ENCODE measurements at regions of chr6 and their contacts with region 1.

Region 1: GRCh38 chr6:103122766-103123601 is 1729.5 kb downstream of the GRIK2 start:
- DNase-seq: peak; percentile 78 to 79
- H3K4me3 ChIP-seq: no peak overlapping the region
- H3K4me3 Mint-ChIP-seq: no peak overlapping the region
- H3K27ac Mint-ChIP-seq: no peak overlapping the region
- H3K4me1 ChIP-seq: no peaks in the 10 kb centered on the region
- H3K4me1 Mint-ChIP-seq: no peaks in the 10 kb centered on the region
- H3K27me3 ChIP-seq: no peaks in the 10 kb centered on the region
- H3K27me3 Mint-ChIP-seq: no peaks in the 10 kb centered on the region
- CTCF ChIP-seq: peak; percentile 40 to 68

Region 2: GRCh38 chr6:101845621-101846020 is 1277.4 kb before region 1 on chr6:
- CTCF ChIA-PET with region 1: no interaction called
- POLR2A ChIA-PET with region 1: no interaction called
- intact Hi-C with region 1: loop called (anchors 10 kb)
- DNase-seq: no peak
- H3K4me3 ChIP-seq: no peak overlapping the region
- H3K4me3 Mint-ChIP-seq: no peak overlapping the region
- H3K27ac Mint-ChIP-seq: no peak overlapping the region
- H3K4me1 ChIP-seq: no peaks in the 10 kb centered on the region
- H3K4me1 Mint-ChIP-seq: no peaks in the 10 kb centered on the region
- H3K27me3 ChIP-seq: no peaks in the 10 kb centered on the region
- H3K27me3 Mint-ChIP-seq: no peaks in the 10 kb centered on the region
- CTCF ChIP-seq: no peak

Region 3: DNA sequence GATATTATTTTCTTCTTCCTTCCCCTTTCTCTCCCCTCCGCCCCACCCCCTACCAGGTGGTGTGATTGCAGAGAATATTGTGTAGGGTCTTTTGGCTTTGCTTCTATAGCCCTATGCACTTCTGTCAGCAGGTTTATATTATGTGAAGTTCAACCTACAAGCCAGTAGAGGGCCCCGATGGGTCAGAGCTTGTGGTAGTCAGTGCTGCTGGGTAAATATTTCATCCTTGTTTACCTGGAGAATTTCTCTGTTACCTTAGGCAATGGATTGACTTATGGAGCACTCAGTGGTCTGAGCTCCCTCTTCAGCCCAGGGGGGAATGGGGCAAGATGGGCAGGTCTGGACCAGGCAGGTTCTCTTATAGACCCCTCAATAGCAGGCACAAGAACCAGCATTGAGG is 1008.6 kb before region 1 on chr6:
- CTCF ChIA-PET with region 1: no interaction called
- POLR2A ChIA-PET with region 1: no interaction called
- intact Hi-C with region 1: loop called (anchors 1 kb)
- DNase-seq: peak in 1 of 2 experiments; percentile 27
- H3K4me3 ChIP-seq: no peak overlapping the region
- H3K4me3 Mint-ChIP-seq: no peak overlapping the region
- H3K27ac Mint-ChIP-seq: no peak overlapping the region
- H3K4me1 ChIP-seq: no peaks in the 10 kb centered on the region
- H3K4me1 Mint-ChIP-seq: no peaks in the 10 kb centered on the region
- H3K27me3 ChIP-seq: no peaks in the 10 kb centered on the region
- H3K27me3 Mint-ChIP-seq: no peaks in the 10 kb centered on the region
- CTCF ChIP-seq: peak in 1 of 2 experiments; percentile 37

Region 4: DNA sequence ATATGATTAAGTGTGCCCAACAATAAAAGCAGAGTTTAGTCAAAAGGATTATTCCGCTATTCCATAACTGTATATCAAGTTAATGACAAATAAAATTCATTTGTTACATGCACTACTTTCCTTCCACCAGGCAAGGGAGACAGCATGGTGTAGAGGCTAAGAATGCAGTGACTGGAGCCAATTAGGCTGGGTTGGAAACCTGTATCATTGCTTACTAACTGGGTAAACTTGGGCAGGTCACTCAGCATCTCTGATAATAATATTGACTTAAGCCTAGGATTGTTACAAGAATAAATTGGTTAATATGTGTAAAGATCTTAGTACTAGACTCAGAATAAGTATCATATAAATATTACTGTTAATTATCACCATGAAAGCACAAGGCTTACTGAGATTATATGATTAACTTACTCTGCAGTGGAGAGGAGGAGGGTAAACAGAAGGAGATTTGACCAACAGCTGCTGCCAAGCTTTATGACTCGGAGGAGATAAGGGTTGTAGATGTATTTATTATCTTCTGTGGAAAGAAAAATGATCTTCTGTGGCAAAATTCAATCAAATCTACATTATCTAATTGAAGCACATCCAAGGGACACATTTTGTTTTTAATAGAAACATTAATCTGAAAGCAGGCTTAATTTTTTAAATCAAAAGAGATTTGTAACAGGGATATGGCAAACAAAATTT is 269.6 kb before region 1 on chr6:
- CTCF ChIA-PET with region 1: interaction called, 3 read pairs
- POLR2A ChIA-PET with region 1: no interaction called
- intact Hi-C with region 1: loop called (anchors 1 kb)
- DNase-seq: peak; percentile 50 to 57
- H3K4me3 ChIP-seq: no peak overlapping the region
- H3K4me3 Mint-ChIP-seq: no peak overlapping the region
- H3K27ac Mint-ChIP-seq: no peak overlapping the region
- H3K4me1 ChIP-seq: peaks cover 7% of the 10 kb centered on the region
- H3K4me1 Mint-ChIP-seq: peaks cover 13% of the 10 kb centered on the region
- H3K27me3 ChIP-seq: no peaks in the 10 kb centered on the region
- H3K27me3 Mint-ChIP-seq: no peaks in the 10 kb centered on the region
- CTCF ChIP-seq: no peak

Region 5: DNA sequence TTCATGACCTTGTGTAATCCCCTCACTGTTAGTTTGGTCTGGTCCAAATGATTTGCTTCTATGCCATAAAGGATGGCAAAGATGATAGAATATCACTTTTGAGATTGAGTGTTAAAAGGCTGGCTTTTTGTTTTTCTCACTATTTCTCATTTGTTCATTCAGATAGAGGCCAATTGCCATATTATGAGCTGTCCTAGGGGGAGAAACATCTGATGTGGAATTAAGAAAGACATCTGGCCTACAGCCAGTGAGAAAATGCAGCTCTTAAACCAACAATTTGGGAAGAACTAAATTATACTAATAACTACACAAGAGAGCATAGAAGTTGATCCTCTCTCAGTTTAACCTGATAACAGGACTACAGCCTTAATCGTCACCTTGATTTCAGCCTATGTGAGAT is 60.8 kb before region 1 on chr6:
- CTCF ChIA-PET with region 1: no interaction called
- POLR2A ChIA-PET with region 1: no interaction called
- intact Hi-C with region 1: no loop called
- DNase-seq: no peak
- H3K4me3 ChIP-seq: no peak overlapping the region
- H3K4me3 Mint-ChIP-seq: no peak overlapping the region
- H3K27ac Mint-ChIP-seq: no peak overlapping the region
- H3K4me1 ChIP-seq: no peaks in the 10 kb centered on the region
- H3K4me1 Mint-ChIP-seq: no peaks in the 10 kb centered on the region
- H3K27me3 ChIP-seq: no peaks in the 10 kb centered on the region
- H3K27me3 Mint-ChIP-seq: no peaks in the 10 kb centered on the region
- CTCF ChIP-seq: no peak

Region 6: DNA sequence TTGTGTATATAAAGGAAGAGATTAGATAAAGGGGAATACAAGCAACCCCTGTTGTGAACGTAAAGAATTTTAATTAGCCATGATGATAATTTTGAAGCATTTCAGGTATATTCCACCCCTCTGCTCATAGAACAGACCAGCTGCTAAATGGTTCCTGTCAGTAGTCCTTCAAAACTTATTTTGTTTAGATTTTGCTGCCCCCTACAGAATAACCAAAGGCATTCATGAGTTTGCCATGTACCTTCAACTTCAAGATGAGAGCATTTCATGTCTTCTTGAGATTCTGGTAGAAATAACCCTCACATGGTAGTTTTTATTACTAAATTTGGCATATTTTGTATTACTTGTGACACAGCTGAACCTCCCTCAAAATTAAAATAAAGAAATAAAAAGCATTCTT is 150.1 kb after region 1 on chr6:
- CTCF ChIA-PET with region 1: no interaction called
- POLR2A ChIA-PET with region 1: no interaction called
- intact Hi-C with region 1: loop called (anchors 2 kb)
- DNase-seq: peak in 1 of 2 experiments; percentile 53
- H3K4me3 ChIP-seq: no peak overlapping the region
- H3K4me3 Mint-ChIP-seq: no peak overlapping the region
- H3K27ac Mint-ChIP-seq: no peak overlapping the region
- H3K4me1 ChIP-seq: no peaks in the 10 kb centered on the region
- H3K4me1 Mint-ChIP-seq: no peaks in the 10 kb centered on the region
- H3K27me3 ChIP-seq: no peaks in the 10 kb centered on the region
- H3K27me3 Mint-ChIP-seq: no peaks in the 10 kb centered on the region
- CTCF ChIP-seq: peak; percentile 27 to 62